IMR-90 (cell line): ENCODE measurements at regions of chrX and their contacts with region 1.

Region 1: DNA sequence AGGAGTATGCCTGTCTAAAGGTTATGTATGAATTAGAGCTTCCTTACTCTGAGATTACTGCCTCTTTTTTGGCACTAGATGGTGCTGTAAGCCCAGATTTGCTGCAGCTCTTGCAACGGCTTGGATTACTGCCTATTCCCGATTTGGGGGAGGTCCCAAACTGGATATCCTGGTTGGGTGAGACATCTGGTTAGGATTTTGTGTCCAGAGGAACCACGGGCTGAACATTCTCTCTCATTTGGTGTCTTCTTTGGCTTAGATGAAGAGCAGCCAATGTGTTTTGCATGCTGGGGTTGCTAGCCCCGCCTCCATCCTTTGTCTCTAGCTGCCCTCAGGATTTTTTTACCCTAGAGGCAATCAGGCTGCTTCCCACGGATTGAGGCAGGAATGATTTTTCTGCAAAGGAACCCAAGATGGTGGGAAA is 31.9 kb downstream of the F8A1 start:
- DNase-seq: peak; percentile 80
- ATAC-seq: peak; percentile 89
- H3K4me3 ChIP-seq: 0 out of 2 replicates have a peak overlapping the region, but pooled peaks have one; percentile 6
- H3K27ac ChIP-seq: no peak overlapping the region
- H3K4me1 ChIP-seq: no peaks in the 10 kb centered on the region
- H3K27me3 ChIP-seq: no peaks in the 10 kb centered on the region
- CTCF ChIP-seq: peak; percentile 66
- POLR2A ChIP-seq: no peak
- RAD21 ChIP-seq: peak; percentile 73

Region 2: DNA sequence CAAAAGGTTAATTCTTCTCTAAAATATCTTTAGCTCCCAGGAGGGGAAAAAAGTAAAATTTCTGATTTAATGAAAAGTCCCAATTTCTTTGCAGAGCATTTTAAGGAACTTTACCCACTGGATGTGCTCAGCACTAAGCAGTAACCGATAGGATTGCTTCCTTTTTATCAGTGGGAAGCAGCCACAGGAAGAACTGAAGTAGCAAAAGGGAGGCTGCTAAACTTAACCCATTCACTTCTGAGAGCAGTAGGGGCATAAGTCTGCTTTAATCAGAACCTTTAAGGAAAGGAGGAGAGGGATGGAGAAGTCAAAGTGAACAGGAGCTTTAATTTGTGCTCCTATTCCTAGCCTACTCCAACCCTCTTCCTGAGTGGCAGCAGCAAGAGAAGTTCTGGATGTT is 104.5 kb after region 1 on chrX and contains the start of gene F8:
- CTCF ChIA-PET with region 1: no interaction called
- POLR2A ChIA-PET with region 1: no interaction called
- dilution Hi-C with region 1: no loop called
- in situ Hi-C with region 1: no loop called
- intact Hi-C with region 1: no loop called
- DNase-seq: no peak
- ATAC-seq: no peak
- H3K4me3 ChIP-seq: no peak within 1 kb of the TSS
- H3K27ac ChIP-seq: no peak within 1 kb of the TSS
- H3K4me1 ChIP-seq: no peaks in the 10 kb centered on the region
- H3K27me3 ChIP-seq: no peaks in the 10 kb centered on the region; the same call in 1 of the 2 replicates
- CTCF ChIP-seq: no peak
- POLR2A ChIP-seq: no peak
- RAD21 ChIP-seq: no peak
- total RNA-seq, gene F8: 1.1 and 1.4 TPM in 2 replicates

Region 3: GRCh38 chrX:155056877-155057792 is 139.1 kb after region 1 on chrX:
- CTCF ChIA-PET with region 1: interaction called, 4 read pairs
- POLR2A ChIA-PET with region 1: no interaction called
- dilution Hi-C with region 1: no loop called
- in situ Hi-C with region 1: no loop called
- intact Hi-C with region 1: loop called (anchors 1 kb)
- DNase-seq: peak; percentile 70
- ATAC-seq: peak; percentile 98
- H3K4me3 ChIP-seq: no peak overlapping the region
- H3K27ac ChIP-seq: no peak overlapping the region
- H3K4me1 ChIP-seq: no peaks in the 10 kb centered on the region
- H3K27me3 ChIP-seq: no peaks in the 10 kb centered on the region
- CTCF ChIP-seq: peak; percentile 74
- POLR2A ChIP-seq: no peak
- RAD21 ChIP-seq: peak; percentile 53

Region 4: DNA sequence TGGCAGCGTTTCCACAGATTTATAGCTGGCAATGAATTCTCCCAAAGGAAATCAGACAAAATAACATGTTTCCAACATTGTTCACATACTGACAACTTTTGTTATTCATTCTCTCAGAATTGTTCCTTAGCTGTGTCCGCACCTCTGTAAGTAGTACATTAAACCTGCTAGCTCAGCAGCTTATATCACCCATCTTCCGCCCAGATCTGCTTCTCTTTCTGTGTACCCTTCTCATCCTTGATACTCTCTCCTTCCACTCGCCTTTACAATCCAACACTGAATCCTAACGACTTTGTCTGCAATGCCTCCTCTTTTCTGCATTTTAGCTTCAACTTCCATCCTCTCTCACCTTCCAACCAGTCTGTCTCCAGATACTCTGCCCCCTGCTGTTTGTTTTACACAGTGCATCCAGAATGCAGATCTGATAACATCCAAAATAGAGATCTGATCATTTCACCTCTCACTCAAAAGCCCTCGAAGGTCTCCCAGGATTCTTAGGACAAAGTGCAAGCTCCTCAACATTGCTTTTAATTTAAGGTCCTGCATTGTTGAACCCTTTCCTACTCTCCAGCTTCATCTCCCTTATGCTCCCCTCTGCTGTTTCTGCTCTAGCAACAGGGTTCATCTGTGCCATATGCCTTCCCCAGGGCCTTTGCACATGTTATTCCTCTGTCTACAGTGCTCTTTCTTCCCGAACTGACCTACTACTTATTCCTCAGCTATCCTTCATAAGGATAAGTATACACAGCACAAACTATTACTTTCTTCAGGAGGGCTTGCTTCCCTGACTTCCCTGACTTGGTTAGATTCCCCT is 230.9 kb after region 1 on chrX:
- CTCF ChIA-PET with region 1: interaction called, 3 read pairs
- POLR2A ChIA-PET with region 1: no interaction called
- dilution Hi-C with region 1: no loop called
- in situ Hi-C with region 1: no loop called
- intact Hi-C with region 1: loop called (anchors 5 kb)
- DNase-seq: peak; percentile 11
- ATAC-seq: no peak
- H3K4me3 ChIP-seq: no peak overlapping the region
- H3K27ac ChIP-seq: no peak overlapping the region
- H3K4me1 ChIP-seq: no peaks in the 10 kb centered on the region
- H3K27me3 ChIP-seq: no peaks in the 10 kb centered on the region
- CTCF ChIP-seq: peak; percentile 43
- POLR2A ChIP-seq: no peak
- RAD21 ChIP-seq: no peak